ENCODE measurements at regions of chr10 and their contacts with region 1.

Region 1: GRCh38 chr10:101840741-101841453 is 2.7 kb downstream of the KCNIP2 start:
- DNase-seq: peak; percentile 64
- H3K4me3 ChIP-seq: peak overlapping the region; percentile 9 to 40 (median 28)
- H3K27ac ChIP-seq: no peak overlapping the region
- H3K4me1 ChIP-seq: peaks cover 14% of the 10 kb centered on the region
- H3K27me3 ChIP-seq: no peaks in the 10 kb centered on the region
- CTCF ChIP-seq: peak; percentile 87 to 98

Region 2: GRCh38 chr10:101602761-101603398 is 238.0 kb before region 1 on chr10:
- CTCF ChIA-PET with region 1: no interaction called
- dilution Hi-C with region 1: no loop called
- in situ Hi-C with region 1: no loop called
- intact Hi-C with region 1: loop called (anchors 1 kb)
- DNase-seq: peak; percentile 62
- H3K4me3 ChIP-seq: no peak overlapping the region
- H3K27ac ChIP-seq: no peak overlapping the region
- H3K4me1 ChIP-seq: no peaks in the 10 kb centered on the region
- H3K27me3 ChIP-seq: no peaks in the 10 kb centered on the region
- CTCF ChIP-seq: peak; percentile 98

Region 3: GRCh38 chr10:101818119-101818871 is 22.6 kb before region 1 on chr10 and contains the start of gene OGA:
- CTCF ChIA-PET with region 1: interaction called, 3 read pairs
- dilution Hi-C with region 1: no loop called
- in situ Hi-C with region 1: no loop called
- intact Hi-C with region 1: loop called (anchors 1 kb)
- DNase-seq: peak; percentile 100
- H3K4me3 ChIP-seq: peak within 1 kb of the TSS; percentile 77 to 88 (median 77)
- H3K27ac ChIP-seq: peak within 1 kb of the TSS; percentile 78
- H3K4me1 ChIP-seq: peaks cover 18% of the 10 kb centered on the region
- H3K27me3 ChIP-seq: no peaks in the 10 kb centered on the region
- CTCF ChIP-seq: no peak
- total RNA-seq, gene OGA: 82.4 to 97.5 TPM

Region 4: DNA sequence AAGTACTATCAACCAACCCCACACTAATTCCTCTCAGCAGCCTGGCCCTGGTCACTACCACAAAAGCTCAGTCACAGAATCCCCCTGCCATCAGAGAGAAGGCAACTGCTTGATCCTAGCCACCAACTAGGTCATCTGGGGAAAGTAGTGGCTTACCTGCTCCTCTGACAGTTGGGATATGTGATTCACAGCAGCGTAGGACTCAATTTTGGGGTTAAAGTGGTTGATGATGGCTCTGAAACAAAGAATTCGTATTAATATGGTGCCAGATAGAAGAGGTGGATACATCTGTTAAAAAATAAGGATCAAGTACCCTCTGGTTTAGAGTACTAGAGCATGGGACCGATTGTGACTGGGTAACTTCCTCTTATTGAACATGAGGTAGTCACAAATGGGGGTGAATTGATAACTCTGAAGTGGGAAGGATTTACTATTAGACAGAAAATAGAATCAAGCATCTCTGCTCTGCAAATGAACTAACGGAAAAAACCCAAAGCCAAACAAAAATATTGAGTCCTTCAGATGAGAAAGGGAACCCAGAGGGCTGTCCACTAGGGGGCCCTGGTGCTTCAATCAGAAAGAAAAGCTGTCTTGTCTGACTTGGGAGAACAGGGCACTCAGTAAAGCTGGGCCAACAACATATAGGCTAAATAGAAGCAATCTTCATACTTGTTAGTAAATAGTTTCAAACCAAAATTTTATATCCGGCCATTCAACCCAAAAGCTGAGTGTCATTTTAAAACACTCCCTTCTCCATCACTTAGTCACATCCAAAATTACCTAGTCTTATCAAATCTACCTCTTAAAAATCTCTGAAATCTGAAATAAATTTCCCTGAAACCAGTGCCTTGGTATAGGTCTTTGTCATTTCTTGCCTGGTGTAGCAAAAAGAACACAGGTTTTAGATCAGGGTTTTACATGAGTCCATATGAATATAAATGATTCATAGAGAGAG is 48.6 kb after region 1 on chr10:
- CTCF ChIA-PET with region 1: no interaction called
- dilution Hi-C with region 1: no loop called
- in situ Hi-C with region 1: no loop called
- intact Hi-C with region 1: loop called (anchors 1 kb)
- DNase-seq: peak; percentile 40
- H3K4me3 ChIP-seq: no peak overlapping the region
- H3K27ac ChIP-seq: no peak overlapping the region
- H3K4me1 ChIP-seq: no peaks in the 10 kb centered on the region
- H3K27me3 ChIP-seq: no peaks in the 10 kb centered on the region
- CTCF ChIP-seq: peak; percentile 89 to 91

Region 5: GRCh38 chr10:102072673-102073527 is 232.0 kb after region 1 on chr10:
- CTCF ChIA-PET with region 1: interaction called, 13 read pairs
- dilution Hi-C with region 1: no loop called
- in situ Hi-C with region 1: no loop called
- intact Hi-C with region 1: loop called (anchors 1 kb)
- DNase-seq: peak; percentile 52
- H3K4me3 ChIP-seq: no peak overlapping the region
- H3K27ac ChIP-seq: no peak overlapping the region
- H3K4me1 ChIP-seq: no peaks in the 10 kb centered on the region
- H3K27me3 ChIP-seq: no peaks in the 10 kb centered on the region
- CTCF ChIP-seq: peak; percentile 95 to 99

Region 6: DNA sequence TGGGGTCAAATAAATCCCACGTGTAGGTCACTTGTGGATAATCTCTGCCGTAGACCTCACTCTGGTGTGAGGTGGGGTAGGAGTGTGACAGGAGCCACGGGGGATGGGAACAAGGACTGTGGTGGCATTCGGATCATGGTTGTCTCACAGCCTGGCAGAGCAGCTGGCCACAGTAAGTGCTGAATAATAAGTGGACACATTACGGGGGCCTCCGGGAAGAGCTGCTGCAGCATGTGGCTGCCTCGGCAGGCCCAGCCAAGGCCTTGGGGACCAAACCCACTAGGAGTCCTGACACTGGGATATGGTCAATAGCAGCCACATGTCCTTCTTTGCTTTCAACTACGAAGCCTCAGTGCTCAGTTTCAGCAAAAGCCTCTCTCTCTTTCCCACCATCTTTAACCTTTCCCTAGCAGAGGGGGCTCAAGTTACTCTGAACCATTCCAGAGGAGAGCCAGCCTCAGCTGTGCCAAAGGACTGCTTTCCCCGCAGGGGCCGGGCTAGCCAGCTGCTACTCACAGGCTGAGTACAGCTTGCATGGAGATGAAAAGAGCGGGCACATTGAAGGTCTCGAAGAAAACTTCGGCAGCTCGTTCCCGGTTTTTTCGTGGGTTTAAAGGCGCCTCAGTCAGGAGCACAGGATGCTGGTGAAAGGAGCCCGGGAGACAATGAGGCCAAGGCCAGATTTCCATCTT is 644.3 kb after region 1 on chr10:
- CTCF ChIA-PET with region 1: no interaction called
- dilution Hi-C with region 1: no loop called
- in situ Hi-C with region 1: no loop called
- intact Hi-C with region 1: no loop called
- DNase-seq: no peak
- H3K4me3 ChIP-seq: no peak overlapping the region
- H3K27ac ChIP-seq: no peak overlapping the region
- H3K4me1 ChIP-seq: no peaks in the 10 kb centered on the region
- H3K27me3 ChIP-seq: no peaks in the 10 kb centered on the region
- CTCF ChIP-seq: no peak